ENCODE measurements at regions of chr2 and their contacts with region 1.

Region 1: DNA sequence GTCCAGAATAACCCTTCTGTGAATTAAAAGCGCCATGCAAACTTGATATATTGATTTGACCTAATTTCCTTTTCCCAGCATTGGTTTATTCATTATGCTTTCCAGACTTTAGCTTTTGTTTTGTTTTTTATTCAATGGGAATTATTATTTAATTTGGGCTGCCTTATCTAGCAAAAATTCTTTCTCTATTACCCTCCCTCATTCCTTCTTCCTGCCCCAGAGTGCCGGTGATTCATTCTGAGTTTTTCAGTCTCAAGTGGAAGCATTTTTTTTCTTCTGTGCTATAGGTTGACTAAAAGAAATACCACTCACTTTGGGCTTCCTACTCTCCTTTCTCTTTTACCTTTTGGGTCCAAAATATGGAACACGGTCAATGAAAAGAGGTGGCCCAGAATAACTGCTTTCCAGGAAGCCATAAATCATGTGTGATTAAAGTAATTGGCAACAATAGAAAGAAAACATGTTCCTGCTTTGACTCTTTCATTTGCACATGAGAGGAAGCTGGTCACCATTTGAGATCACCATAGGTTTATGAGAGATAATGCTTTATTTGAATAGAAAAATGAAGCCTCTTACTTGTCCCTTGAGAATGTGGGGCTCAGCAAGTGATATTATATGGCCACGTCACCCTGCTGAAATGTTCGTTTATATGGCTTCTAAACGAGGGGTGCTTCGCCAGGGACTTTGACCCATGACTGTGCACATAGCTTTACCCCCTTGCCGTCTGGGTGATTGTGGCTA is 422.8 kb upstream of the ZEB2 start:
- DNase-seq: peak; percentile 81
- ATAC-seq: peak; percentile 44
- H3K4me3 ChIP-seq: peak overlapping the region; percentile 14
- H3K27ac ChIP-seq: peak overlapping the region; percentile 94
- H3K4me1 ChIP-seq: peaks cover 84% of the 10 kb centered on the region
- H3K27me3 ChIP-seq: no peaks in the 10 kb centered on the region
- CTCF ChIP-seq: no peak

Region 2: GRCh38 chr2:144835634-144836350 is 106.9 kb before region 1 on chr2:
- CTCF ChIA-PET with region 1: no interaction called
- POLR2A ChIA-PET with region 1: interaction called, 15 read pairs
- intact Hi-C with region 1: no loop called
- DNase-seq: peak; percentile 42
- ATAC-seq: peak; percentile 74
- H3K4me3 ChIP-seq: no peak overlapping the region
- H3K27ac ChIP-seq: no peak overlapping the region
- H3K4me1 ChIP-seq: peaks cover 31% of the 10 kb centered on the region
- H3K27me3 ChIP-seq: no peaks in the 10 kb centered on the region
- CTCF ChIP-seq: no peak

Region 3: GRCh38 chr2:145007093-145007959 is 64.6 kb after region 1 on chr2:
- CTCF ChIA-PET with region 1: no interaction called
- POLR2A ChIA-PET with region 1: no interaction called
- intact Hi-C with region 1: loop called (anchors 2 kb)
- DNase-seq: peak; percentile 97
- ATAC-seq: peak; percentile 86
- H3K4me3 ChIP-seq: peak overlapping the region; percentile 50
- H3K27ac ChIP-seq: peak overlapping the region; percentile 95
- H3K4me1 ChIP-seq: peaks cover 40% of the 10 kb centered on the region
- H3K27me3 ChIP-seq: no peaks in the 10 kb centered on the region
- CTCF ChIP-seq: no peak

Region 4: DNA sequence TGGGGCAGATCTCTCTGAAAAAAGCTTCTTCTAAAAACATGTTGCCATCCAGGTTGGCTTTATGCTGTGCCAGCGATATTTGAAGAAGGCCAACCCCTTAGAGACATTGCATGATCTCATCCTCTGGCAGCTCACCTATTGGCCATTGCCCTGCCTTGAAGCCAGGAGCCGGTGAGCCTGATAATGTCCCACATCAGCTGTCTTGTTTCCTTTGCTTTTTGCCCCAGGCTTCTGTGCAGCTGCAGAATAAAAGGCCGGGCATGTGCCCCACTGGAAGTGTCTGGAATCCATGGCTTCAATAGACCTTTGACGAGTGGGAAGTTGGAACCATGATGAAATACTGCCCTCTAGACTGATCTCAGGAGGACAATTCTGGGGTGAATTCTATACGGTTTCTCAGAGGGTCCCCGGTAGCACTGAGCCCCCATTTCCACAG is 100.7 kb after region 1 on chr2:
- CTCF ChIA-PET with region 1: no interaction called
- POLR2A ChIA-PET with region 1: no interaction called
- intact Hi-C with region 1: loop called (anchors 1 kb)
- DNase-seq: no peak
- ATAC-seq: no peak
- H3K4me3 ChIP-seq: no peak overlapping the region
- H3K27ac ChIP-seq: no peak overlapping the region
- H3K4me1 ChIP-seq: peaks cover 30% of the 10 kb centered on the region
- H3K27me3 ChIP-seq: no peaks in the 10 kb centered on the region
- CTCF ChIP-seq: no peak; the same call in 1 of the 2 replicates

Region 5: GRCh38 chr2:145075454-145076062 is 132.9 kb after region 1 on chr2:
- CTCF ChIA-PET with region 1: no interaction called
- POLR2A ChIA-PET with region 1: no interaction called
- intact Hi-C with region 1: no loop called
- DNase-seq: no peak
- ATAC-seq: no peak
- H3K4me3 ChIP-seq: no peak overlapping the region
- H3K27ac ChIP-seq: no peak overlapping the region
- H3K4me1 ChIP-seq: no peaks in the 10 kb centered on the region
- H3K27me3 ChIP-seq: no peaks in the 10 kb centered on the region
- CTCF ChIP-seq: no peak

Region 6: DNA sequence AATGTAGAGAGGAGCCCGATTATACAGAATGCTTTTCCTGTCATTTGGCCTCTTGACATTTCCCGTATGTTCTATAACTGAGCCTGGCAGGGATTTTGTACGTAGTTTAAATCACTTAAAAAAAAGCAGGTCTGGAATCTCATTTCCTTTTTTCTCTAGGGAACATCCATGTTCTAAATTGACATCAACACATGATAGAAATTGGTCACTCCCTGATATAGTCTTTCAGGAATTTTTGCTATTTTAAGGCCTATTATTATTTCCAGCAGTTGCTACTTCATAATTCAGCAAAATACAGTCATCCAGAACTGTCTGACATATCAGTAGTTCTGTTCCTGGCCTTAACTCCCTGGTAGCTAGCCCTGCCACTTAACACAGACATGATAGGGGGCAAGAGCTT is 142.9 kb after region 1 on chr2:
- CTCF ChIA-PET with region 1: no interaction called
- POLR2A ChIA-PET with region 1: interaction called, 10 read pairs
- intact Hi-C with region 1: no loop called
- DNase-seq: no peak
- ATAC-seq: no peak
- H3K4me3 ChIP-seq: no peak overlapping the region
- H3K27ac ChIP-seq: no peak overlapping the region
- H3K4me1 ChIP-seq: no peaks in the 10 kb centered on the region; the same call in 1 of the 2 replicates
- H3K27me3 ChIP-seq: no peaks in the 10 kb centered on the region
- CTCF ChIP-seq: no peak

Region 7: GRCh38 chr2:145484443-145485097 is 541.9 kb after region 1 on chr2:
- CTCF ChIA-PET with region 1: no interaction called
- POLR2A ChIA-PET with region 1: no interaction called
- intact Hi-C with region 1: loop called (anchors 10 kb)
- DNase-seq: peak; percentile 91
- ATAC-seq: peak; percentile 98
- H3K4me3 ChIP-seq: no peak overlapping the region
- H3K27ac ChIP-seq: peak overlapping the region; percentile 71
- H3K4me1 ChIP-seq: peaks cover 16% of the 10 kb centered on the region
- H3K27me3 ChIP-seq: no peaks in the 10 kb centered on the region
- CTCF ChIP-seq: peak; percentile 70

Measured in PC-3 (cell line).